Posterior vena cava (tissue), 2 donors: ENCODE measurements at regions of chr1 and their contacts with region 1.

Region 1: DNA sequence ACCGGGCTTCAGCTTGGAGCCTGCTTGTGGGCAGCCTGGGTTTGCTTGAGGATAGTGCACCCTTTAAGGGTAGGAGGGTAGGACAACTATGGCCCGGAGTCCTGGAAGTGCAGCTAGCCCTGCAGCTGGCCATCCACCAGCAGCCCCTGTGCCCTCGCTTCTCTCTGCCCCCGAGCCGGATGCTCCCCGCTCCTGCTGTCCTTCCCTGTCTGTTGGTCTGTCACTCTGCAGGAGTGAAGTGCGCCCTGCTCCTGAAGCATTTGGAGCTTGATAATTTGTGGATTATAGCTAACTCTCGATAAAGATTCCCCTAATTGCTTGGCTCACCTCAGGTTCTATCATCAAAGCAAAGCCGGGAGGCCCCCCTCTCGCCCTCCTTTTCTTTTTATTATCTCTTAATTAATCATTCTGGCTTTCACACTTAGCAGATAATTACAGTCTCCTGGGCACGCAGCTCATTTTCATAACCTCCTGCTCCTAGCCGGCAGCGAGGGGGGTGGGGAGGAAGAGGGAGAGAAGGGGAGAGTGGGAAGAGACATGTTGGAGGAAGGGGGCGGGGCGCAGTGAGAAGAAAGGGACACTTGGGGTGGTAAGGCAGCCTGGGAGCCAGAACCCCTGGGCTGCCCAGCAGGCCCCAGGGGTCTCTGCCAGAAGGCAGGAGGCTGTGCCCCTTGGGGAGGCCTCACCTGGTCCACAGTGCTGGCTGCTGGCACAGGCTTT is 14.4 kb downstream of the KIRREL1 start:
- DNase-seq: no peak

Region 2: GRCh38 chr1:157390651-157391050 is 617.2 kb before region 1 on chr1:
- intact Hi-C with region 1: no loop called
- DNase-seq: no peak

Region 3: GRCh38 chr1:157944663-157945280 is 63.1 kb before region 1 on chr1:
- intact Hi-C with region 1: no loop called
- DNase-seq: no peak

Region 4: DNA sequence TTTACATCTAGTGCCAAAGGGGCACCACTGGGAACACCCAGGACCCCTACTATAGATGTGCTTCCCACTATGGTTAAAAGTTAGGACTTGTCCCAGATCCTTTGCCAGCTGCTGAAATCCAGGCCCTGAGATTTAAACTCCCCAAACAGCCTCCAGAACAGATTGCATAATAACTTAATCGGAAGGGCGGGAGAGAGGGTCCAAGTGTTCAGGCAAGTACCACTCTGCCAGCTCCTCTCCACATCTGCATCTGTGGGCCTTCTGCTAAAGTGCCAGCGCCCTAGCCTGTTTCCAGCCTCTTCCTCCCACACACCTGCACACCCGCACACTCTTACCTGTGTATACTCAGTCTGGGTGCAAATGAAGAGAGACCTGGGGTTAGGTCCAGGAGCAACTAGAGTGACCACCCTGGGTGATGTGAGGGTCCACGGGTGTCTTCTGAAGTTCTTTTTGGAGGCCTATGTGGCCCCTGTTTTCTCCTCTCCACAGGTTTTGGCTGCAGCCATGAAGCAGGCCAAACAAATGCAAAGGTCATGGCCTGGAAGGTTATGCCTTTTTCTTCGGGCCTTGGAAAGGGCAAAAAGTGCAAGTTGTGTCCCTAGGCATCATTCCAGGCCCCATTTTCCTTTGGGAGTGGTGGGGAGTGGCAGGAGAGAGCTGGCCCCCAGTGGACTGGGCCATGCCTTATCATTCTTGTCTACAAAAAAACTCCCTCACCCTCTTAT is 14.9 kb after region 1 on chr1:
- intact Hi-C with region 1: loop called in 1 of 2 experiments (anchors 2 kb)
- DNase-seq: no peak